AG04449 (cell line): ENCODE measurements at regions of chr11 and their contacts with region 1.

Region 1: DNA sequence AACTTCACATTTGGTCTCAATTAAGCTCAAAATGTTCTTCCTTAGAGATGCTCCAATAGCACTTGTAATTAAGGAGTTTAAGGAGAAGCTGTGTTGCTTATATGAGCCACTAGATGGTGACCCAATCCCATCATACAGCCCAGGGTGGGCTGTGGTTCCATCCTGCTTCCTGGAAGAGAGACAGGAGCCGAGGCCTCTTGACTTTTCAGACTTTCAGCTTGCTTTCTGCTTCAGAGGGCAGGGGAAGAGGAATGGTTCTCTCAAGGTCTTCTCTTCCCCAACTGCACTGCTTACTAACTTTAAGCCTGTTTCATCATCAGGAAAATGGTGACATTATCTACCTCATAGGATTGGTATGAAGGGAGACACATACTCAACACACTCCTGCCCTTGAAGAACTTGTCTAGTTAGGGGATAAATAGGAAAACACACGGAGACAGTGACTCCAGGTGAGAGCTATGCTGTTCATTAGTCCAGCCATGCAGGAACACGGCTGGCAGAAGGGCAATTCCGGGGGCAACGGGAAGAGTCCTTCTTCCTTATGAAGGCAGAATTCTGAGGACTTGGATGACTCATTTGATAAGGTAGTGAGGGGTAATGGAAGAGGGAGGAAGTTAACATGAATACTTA is 20.1 kb downstream of the TMEM218 start:
- DNase-seq: peak; percentile 28
- H3K4me3 ChIP-seq: no peak overlapping the region
- CTCF ChIP-seq: peak; percentile 57

Region 2: DNA sequence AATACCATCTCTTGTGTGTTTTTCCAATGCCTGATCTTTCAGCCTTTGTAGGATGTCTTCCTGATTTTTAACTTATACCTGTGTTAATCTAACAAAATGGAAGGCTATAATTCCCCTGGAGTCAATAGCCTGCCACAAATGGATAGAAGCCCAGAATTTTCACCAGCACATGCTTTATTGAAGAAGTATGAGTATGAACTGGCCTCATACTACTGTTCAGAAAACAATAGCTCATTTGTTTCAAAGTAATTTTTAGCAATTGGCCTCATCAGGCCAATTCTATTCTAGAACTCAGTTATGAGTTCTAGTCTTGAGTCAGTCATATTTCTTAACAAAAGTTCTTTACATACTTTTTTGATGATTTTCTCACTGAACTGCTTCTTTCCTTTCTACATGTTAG is 68.8 kb before region 1 on chr11:
- CTCF ChIA-PET with region 1: no interaction called
- POLR2A ChIA-PET with region 1: no interaction called
- DNase-seq: no peak
- H3K4me3 ChIP-seq: no peak overlapping the region
- CTCF ChIP-seq: no peak

Region 3: GRCh38 chr11:125075849-125076317 is 15.5 kb before region 1 on chr11:
- CTCF ChIA-PET with region 1: interaction called, 31 read pairs
- POLR2A ChIA-PET with region 1: no interaction called
- DNase-seq: no peak
- H3K4me3 ChIP-seq: no peak overlapping the region
- CTCF ChIP-seq: no peak

Region 4: DNA sequence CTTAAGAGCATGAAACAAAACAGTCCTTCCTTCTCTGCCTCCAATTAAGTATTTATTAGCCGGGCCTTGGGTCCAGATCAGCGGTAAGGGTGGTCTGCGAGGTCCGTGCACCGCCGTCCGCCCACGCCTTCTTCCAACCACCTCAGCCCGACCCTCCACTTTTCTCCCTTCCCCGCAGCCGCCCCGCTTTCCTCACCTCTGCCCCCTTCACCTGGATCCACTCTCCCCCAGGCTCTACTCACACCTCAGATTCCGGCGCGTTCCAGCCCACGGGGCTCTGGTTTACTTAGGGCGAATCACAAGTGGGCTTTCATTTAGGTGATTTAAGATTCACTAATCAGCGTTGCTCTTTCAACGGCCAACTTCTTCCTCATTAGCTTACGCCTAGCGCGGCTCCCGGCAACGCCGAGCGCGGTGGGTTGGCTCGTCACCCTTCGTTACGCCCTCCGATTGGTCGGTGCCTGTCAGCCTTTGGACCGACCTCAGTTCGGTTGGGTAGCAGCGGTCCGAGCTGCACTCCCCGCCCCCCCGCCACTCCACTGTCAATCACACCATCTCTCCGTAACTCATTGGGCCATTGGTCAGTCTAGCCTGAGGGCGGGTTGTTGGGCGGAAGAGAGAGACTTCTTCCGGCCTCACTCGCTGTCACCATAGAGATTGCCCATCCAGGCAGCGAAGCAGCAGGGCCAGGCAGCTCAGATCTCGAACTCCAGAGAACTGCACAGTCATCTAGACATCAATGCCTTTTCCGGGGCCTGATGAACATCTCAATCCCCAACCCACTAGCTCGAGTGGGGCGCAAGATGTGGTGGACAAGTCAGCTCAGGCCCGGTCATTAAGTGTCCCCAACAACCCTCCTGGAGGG is 20.2 kb after region 1 on chr11 and contains the start of gene TMEM218:
- CTCF ChIA-PET with region 1: interaction called, 24 read pairs
- POLR2A ChIA-PET with region 1: no interaction called
- DNase-seq: peak; percentile 94
- H3K4me3 ChIP-seq: peak within 1 kb of the TSS; percentile 87
- CTCF ChIP-seq: no peak

Region 5: DNA sequence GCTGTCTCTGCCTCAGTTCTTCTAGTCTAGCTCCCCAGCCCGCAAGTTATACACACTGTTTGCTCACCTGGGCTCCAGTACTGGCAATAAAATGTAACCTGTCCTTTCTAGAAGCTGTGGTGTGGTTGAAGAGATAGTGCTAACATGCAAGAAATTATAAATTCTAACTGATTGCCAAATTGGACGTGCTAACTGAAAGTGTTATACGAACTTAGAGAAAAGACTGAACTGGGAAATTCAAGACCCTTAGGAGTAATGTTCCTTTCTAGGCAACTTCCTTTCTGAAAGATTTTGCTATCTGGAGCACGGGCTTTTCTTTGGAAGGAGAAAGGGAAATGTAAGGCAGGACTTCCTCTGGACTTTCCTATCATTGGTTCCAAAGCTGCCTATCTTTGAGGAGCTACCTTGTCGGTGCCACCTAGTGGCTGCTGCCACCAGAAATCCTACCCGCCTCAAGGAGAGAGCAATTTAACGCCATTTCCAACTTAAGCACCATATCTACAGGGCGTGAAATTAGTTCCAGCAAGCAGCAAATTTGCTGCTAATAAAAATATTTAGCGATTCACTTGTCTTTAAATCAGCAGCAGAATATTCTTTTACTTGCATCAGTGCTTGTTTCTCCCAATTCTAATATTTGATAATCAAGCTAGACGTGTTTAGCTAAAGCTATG is 32.7 kb after region 1 on chr11:
- CTCF ChIA-PET with region 1: interaction called, 17 read pairs
- POLR2A ChIA-PET with region 1: no interaction called
- DNase-seq: no peak
- H3K4me3 ChIP-seq: no peak overlapping the region
- CTCF ChIP-seq: peak; percentile 41

Region 6: GRCh38 chr11:125364121-125364826 is 272.9 kb after region 1 on chr11:
- CTCF ChIA-PET with region 1: interaction called, 16 read pairs
- POLR2A ChIA-PET with region 1: no interaction called
- DNase-seq: peak; percentile 37
- H3K4me3 ChIP-seq: no peak overlapping the region
- CTCF ChIP-seq: peak; percentile 60

Region 7: DNA sequence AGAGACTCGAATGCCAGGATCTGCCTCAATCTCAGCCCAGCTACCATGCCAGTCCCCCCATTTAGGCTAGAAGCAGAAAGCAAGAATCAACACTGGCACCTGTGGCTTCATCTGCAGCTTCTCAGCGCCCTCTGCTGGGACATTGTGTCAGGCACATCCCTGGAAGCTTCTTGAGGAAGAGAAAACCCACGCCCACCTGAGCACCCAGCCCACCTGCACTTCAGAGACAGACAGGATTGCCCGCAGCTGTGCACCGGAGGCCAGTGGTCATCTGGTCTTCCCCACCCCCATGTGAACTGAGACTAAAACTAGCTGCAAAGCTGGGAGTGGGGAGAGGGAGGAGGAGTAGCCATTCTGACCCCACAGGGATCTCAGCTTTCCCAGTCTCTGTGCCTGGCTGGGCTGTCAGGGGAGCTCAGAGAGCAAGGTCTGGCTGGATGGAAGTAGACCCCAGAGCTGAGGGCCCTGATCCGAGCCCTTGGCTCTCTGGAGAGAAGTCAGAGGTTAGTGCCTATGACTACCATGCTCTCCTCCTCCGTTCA is 337.9 kb after region 1 on chr11:
- CTCF ChIA-PET with region 1: interaction called, 20 read pairs
- POLR2A ChIA-PET with region 1: no interaction called
- DNase-seq: no peak
- H3K4me3 ChIP-seq: no peak overlapping the region
- CTCF ChIP-seq: peak; percentile 85